SK-N-SH (cell line): ENCODE measurements at regions of chrX and their contacts with region 1.

Region 1: DNA sequence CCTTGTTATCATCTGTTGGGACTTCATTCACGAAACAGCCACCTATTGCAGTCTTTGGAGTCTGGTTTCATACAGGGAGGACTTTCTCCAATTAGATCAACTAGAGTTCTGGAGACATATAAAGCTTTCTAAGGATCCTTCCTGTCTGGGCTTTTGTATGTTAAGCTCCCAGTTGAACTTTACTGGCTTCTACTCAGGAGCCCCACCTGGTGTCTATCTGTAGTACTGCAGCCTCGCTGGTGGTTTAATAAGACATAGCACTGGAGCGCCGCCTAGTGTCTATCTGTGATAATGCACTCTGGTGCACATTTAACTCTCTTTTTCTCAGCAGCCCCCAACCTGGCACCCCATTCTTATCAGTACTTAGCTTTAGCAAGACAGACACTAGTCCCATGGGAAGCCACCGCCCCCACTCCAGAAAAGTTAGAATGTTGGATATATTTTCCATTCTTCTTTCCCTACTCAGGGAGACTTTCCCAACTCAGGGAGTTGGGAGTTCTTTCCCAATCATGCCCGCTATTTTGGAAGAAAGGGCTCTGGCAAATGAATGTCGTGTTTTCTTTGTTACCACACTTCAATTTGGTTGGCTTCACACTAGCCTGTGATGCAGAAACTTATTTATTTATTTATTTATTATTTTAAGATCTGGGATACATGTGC is 36.9 kb upstream of the SYTL4 start:
- DNase-seq: peak; percentile 64
- H3K4me3 ChIP-seq: peak overlapping the region in 1 of 2 experiments; percentile 23; a peak in 1 of 4 replicates
- H3K27ac ChIP-seq: no peak overlapping the region
- H3K4me1 ChIP-seq: no peaks in the 10 kb centered on the region
- H3K27me3 ChIP-seq: no peaks in the 10 kb centered on the region
- CTCF ChIP-seq: peak; percentile 100
- EP300 ChIP-seq: no peak
- RAD21 ChIP-seq: peak; percentile 97

Region 2: DNA sequence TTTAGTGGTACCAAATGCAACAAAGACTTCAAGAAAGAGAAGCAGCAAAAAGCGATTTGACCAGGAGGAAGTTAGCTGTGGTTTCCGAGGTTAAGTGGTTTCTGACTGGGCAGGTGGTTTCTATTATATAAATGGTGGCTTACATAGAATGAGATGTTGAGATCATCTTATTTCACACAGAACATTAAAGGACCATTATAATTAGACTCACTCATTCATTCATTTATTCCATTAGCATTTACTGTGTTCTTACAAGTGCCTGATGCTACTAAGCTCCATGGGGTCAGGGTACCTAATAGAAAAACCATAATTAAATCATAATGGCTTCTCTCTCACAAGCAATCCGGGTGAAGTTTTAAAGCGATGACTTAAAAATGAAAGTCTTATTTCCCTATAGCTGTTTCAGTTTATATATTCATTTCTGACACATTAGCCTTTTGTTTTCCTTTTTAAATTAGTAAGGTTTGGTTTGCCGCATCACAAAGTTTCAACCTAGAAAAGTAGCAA is 142.8 kb before region 1 on chrX:
- CTCF ChIA-PET with region 1: no interaction called
- POLR2A ChIA-PET with region 1: no interaction called
- DNase-seq: no peak
- H3K4me3 ChIP-seq: no peak overlapping the region
- H3K27ac ChIP-seq: no peak overlapping the region
- H3K4me1 ChIP-seq: no peaks in the 10 kb centered on the region; a peak in 1 of 4 replicates
- H3K27me3 ChIP-seq: no peaks in the 10 kb centered on the region; the same call in 1 of the 2 replicates
- CTCF ChIP-seq: no peak
- EP300 ChIP-seq: no peak
- RAD21 ChIP-seq: no peak

Region 3: GRCh38 chrX:100649550-100650356 is 119.1 kb before region 1 on chrX:
- CTCF ChIA-PET with region 1: interaction called, 18 read pairs
- POLR2A ChIA-PET with region 1: no interaction called
- DNase-seq: no peak
- H3K4me3 ChIP-seq: no peak overlapping the region
- H3K27ac ChIP-seq: no peak overlapping the region
- H3K4me1 ChIP-seq: 0 out of 4 replicates have a peak, but pooled peaks cover 0 to 6% of the 10 kb centered on the region in 2 experiments
- H3K27me3 ChIP-seq: 0 out of 2 replicates have a peak, but pooled peaks cover 4% of the 10 kb centered on the region
- CTCF ChIP-seq: no peak
- EP300 ChIP-seq: no peak
- RAD21 ChIP-seq: no peak

Region 4: DNA sequence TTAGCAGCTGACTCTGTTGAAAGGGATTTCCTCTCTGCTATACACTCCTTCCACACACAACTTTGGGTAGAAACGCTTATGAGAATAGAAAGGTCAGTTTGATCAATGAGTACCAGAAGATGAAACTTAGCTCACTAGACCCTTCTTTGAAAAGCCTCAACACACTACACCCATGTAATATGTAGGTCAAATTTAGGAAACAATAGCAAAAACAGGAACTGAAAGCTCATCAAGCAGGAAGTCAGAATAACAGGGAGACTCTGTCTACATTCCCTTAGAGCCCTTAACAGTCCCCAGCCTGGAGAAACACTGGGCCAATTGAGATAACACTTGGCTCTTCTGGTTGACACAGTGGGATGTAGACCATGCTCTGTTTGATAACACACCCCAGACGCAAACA is 94.1 kb before region 1 on chrX:
- CTCF ChIA-PET with region 1: interaction called, 63 read pairs
- POLR2A ChIA-PET with region 1: no interaction called
- DNase-seq: no peak
- H3K4me3 ChIP-seq: no peak overlapping the region
- H3K27ac ChIP-seq: no peak overlapping the region
- H3K4me1 ChIP-seq: no peaks in the 10 kb centered on the region
- H3K27me3 ChIP-seq: peaks cover 6% of the 10 kb centered on the region; the same call in 1 of the 2 replicates
- CTCF ChIP-seq: no peak
- EP300 ChIP-seq: no peak
- RAD21 ChIP-seq: no peak

Region 5: GRCh38 chrX:100695302-100695701 is 73.5 kb before region 1 on chrX:
- CTCF ChIA-PET with region 1: interaction called, 30 read pairs
- POLR2A ChIA-PET with region 1: no interaction called
- DNase-seq: peak; percentile 8
- H3K4me3 ChIP-seq: no peak overlapping the region
- H3K27ac ChIP-seq: peak overlapping the region in 1 of 2 experiments; percentile 45; a peak in 1 of 4 replicates
- H3K4me1 ChIP-seq: no peaks in the 10 kb centered on the region
- H3K27me3 ChIP-seq: no peaks in the 10 kb centered on the region
- CTCF ChIP-seq: no peak
- EP300 ChIP-seq: no peak
- RAD21 ChIP-seq: no peak

Region 6: DNA sequence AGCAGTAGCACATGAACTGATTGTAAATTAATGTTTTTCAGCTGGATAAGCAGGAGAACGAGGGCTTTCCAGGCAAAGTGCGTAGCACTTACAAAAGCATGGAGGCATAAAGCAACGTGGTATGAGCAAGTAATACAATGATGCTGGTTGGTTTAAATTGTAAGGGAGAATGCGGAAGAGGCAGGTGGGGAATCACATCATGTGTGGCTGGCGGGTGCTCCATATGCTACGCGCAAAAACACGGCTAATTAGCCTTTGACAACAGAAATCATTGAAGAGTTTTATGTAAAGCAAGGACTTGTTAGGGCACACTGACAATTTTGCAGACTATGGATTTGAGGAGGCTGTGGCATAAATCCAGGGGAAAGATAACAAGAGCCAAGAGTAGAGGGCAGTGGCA is 51.4 kb before region 1 on chrX:
- CTCF ChIA-PET with region 1: interaction called, 10 read pairs
- POLR2A ChIA-PET with region 1: no interaction called
- DNase-seq: no peak
- H3K4me3 ChIP-seq: no peak overlapping the region
- H3K27ac ChIP-seq: no peak overlapping the region
- H3K4me1 ChIP-seq: no peaks in the 10 kb centered on the region
- H3K27me3 ChIP-seq: no peaks in the 10 kb centered on the region
- CTCF ChIP-seq: no peak
- EP300 ChIP-seq: no peak
- RAD21 ChIP-seq: no peak

Region 7: DNA sequence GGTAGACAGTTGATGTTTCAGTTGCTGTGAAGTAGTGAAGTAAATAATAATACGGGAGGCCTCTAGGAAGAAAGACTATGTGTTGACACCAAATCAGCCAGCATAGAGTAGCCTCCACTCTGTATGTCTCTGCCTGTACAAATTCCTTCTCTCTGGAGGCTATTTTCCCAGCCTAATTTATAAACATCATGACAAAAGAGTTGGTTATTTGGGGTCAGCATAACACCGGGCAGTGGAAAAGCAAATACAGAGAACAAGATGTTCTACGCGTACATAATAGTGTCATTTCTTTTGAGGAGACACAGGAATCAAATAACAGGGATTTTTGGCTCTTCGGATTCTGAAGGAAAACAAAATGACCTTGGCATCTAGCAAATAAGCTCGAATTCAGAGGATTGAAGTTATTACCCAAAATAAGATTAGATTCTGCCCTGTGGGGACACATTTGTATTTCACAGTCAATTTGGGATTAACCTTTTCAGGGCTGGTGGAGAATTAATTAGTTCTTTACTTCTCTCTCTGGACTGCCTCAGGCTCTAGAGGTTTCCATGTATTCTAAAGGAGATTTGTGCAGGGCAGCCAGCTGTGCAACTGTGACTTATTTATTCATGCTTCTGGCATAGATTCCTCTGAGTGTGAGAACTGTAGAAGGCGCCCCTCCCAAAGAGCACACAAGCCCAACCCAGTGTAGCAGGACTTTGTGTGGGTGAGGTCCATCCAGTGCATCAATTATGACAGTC is 22.8 kb before region 1 on chrX:
- CTCF ChIA-PET with region 1: interaction called, 35 read pairs
- POLR2A ChIA-PET with region 1: no interaction called
- DNase-seq: no peak
- H3K4me3 ChIP-seq: no peak overlapping the region
- H3K27ac ChIP-seq: no peak overlapping the region
- H3K4me1 ChIP-seq: peaks cover 0 to 2% of the 10 kb centered on the region in 2 experiments; a peak in 1 of 4 replicates
- H3K27me3 ChIP-seq: peaks cover 4% of the 10 kb centered on the region; the same call in 1 of the 2 replicates
- CTCF ChIP-seq: no peak
- EP300 ChIP-seq: 0 out of 4 replicates have a peak, but pooled peaks of 1 of the 2 experiments have one; percentile 9
- RAD21 ChIP-seq: no peak

Region 8: GRCh38 chrX:100883654-100884053 is 114.8 kb after region 1 on chrX:
- CTCF ChIA-PET with region 1: no interaction called
- POLR2A ChIA-PET with region 1: no interaction called
- DNase-seq: no peak
- H3K4me3 ChIP-seq: no peak overlapping the region
- H3K27ac ChIP-seq: no peak overlapping the region
- H3K4me1 ChIP-seq: no peaks in the 10 kb centered on the region
- H3K27me3 ChIP-seq: no peaks in the 10 kb centered on the region
- CTCF ChIP-seq: no peak
- EP300 ChIP-seq: no peak
- RAD21 ChIP-seq: no peak

Region 9: DNA sequence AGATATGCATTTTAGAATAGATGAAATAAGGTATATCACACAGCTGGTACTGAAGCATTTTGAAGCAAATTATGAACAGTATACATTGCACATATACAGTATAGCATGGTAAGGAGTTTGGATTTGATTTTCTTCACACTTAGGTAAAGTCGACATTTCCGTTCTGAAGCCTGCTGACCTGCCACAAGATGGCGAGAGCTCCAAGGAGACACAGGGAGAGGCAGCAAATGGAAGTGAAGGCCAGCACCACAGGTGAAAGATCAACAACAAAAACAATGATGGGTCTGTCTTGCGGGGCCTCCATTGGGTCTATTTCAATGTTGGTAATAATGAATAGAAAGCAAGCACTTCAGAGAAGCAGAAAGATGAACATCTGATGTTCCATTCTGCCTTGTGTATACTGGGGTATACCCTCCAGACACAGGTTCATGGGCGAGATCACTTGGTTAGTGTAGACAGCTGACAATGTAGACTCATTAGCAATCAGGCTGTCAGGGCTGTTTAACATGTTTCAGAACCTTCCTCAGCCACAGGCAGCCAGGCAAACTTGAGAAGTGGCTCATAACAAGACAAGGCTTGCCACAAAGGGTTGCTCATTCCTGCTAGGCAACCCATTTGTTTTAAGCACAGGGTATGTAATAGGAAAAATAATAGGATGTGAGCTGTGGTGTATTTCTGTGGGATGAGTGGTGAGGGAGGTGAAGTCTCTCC is 126.7 kb after region 1 on chrX:
- CTCF ChIA-PET with region 1: no interaction called
- POLR2A ChIA-PET with region 1: no interaction called
- DNase-seq: peak; percentile 19
- H3K4me3 ChIP-seq: no peak overlapping the region
- H3K27ac ChIP-seq: no peak overlapping the region
- H3K4me1 ChIP-seq: no peaks in the 10 kb centered on the region
- H3K27me3 ChIP-seq: no peaks in the 10 kb centered on the region; the same call in 1 of the 2 replicates
- CTCF ChIP-seq: peak; percentile 57
- EP300 ChIP-seq: no peak
- RAD21 ChIP-seq: peak; percentile 74

Region 10: GRCh38 chrX:100999451-100999850 is 230.6 kb after region 1 on chrX:
- CTCF ChIA-PET with region 1: no interaction called
- POLR2A ChIA-PET with region 1: no interaction called
- DNase-seq: no peak
- H3K4me3 ChIP-seq: no peak overlapping the region
- H3K27ac ChIP-seq: no peak overlapping the region
- H3K4me1 ChIP-seq: no peaks in the 10 kb centered on the region
- H3K27me3 ChIP-seq: no peaks in the 10 kb centered on the region
- CTCF ChIP-seq: no peak
- EP300 ChIP-seq: no peak
- RAD21 ChIP-seq: no peak